Dorsolateral prefrontal cortex (tissue), 120 donors: ENCODE measurements at regions of chr4 and their contacts with region 1.

Region 1: DNA sequence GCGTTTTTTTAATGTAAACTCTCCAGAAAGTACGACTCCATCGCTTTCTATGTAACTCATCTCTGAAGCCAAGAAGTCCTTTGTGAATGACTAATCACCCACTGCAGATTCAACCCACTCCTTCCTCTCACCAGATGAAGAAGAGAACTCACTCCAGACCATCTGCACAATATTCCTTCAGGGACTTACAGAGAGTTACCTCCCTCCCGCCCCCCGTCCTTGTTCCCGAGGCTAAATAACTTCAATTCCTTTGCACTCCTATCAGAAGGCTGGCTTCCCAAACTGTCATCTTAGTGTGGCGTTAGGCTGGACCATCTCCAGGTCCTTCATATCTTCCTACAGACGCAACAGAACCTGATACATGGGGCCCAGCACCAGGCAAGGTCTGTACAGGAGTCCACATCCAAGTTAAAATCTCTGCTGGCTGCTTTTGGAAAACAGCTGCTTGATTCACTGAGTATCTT is 82.4 kb downstream of the AFAP1 start:
- DNase-seq: peak in 1 of 10 donors; percentile 61
- H3K4me3 ChIP-seq: peak overlapping the region in 1 of 59 donors; percentile 5
- H3K27ac ChIP-seq: peak overlapping the region in 20 of 59 donors; percentile 9 to 77 (median 34)
- H3K27me3 ChIP-seq: no peaks in the 10 kb centered on the region
- CTCF ChIP-seq: no peak

Region 2: GRCh38 chr4:7186061-7186461 is 671.2 kb before region 1 on chr4:
- intact Hi-C with region 1: no loop called
- DNase-seq: peak in 4 of 10 donors; percentile 16 to 34 (median 27)
- H3K4me3 ChIP-seq: no peak overlapping the region
- H3K27ac ChIP-seq: no peak overlapping the region
- H3K27me3 ChIP-seq: peaks cover 0 to 17% (median 0%) of the 10 kb centered on the region in 45 donors
- CTCF ChIP-seq: peak in 30 of 56 donors; percentile 10 to 46 (median 24)

Region 3: GRCh38 chr4:7581477-7581876 is 275.8 kb before region 1 on chr4:
- intact Hi-C with region 1: no loop called
- DNase-seq: no peak
- H3K4me3 ChIP-seq: no peak overlapping the region
- H3K27ac ChIP-seq: no peak overlapping the region
- H3K27me3 ChIP-seq: no peaks in the 10 kb centered on the region
- CTCF ChIP-seq: no peak

Region 4: DNA sequence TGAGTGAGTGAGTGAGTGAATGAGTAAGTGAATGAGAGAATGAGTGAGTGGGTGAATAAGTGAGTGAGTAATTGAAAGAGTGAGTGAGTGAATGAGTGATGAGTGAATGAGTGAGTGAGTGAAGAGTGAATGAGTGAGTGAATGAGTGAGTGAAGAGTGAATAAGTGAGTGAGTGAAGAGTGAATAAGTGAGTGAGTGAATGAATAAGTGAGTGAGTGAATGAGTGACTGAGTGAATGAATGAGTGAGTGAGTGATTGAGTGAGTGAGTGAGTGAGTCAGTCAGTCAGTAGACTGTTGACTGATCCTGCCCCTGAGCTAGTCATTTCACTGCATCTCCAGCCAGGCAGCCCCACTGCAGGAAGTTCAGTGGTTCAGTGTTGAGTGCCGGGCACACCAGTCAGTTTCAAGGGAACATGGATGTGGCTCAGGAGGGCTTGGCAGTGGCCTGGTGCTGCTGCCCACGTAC is 194.2 kb before region 1 on chr4:
- intact Hi-C with region 1: no loop called
- DNase-seq: no peak
- H3K4me3 ChIP-seq: no peak overlapping the region
- H3K27ac ChIP-seq: no peak overlapping the region
- H3K27me3 ChIP-seq: no peaks in the 10 kb centered on the region
- CTCF ChIP-seq: no peak

Region 5: GRCh38 chr4:7973545-7973981 is 116.3 kb after region 1 on chr4:
- intact Hi-C with region 1: loop called in 1 of 2 experiments (anchors 5 kb)
- DNase-seq: peak in 2 of 10 donors; percentile 41 to 57
- H3K4me3 ChIP-seq: no peak overlapping the region
- H3K27ac ChIP-seq: peak overlapping the region in 38 of 59 donors; percentile 1 to 71 (median 40)
- H3K27me3 ChIP-seq: no peaks in the 10 kb centered on the region
- CTCF ChIP-seq: no peak